ENCODE measurements at regions of chr9 and their contacts with region 1.

Region 1: DNA sequence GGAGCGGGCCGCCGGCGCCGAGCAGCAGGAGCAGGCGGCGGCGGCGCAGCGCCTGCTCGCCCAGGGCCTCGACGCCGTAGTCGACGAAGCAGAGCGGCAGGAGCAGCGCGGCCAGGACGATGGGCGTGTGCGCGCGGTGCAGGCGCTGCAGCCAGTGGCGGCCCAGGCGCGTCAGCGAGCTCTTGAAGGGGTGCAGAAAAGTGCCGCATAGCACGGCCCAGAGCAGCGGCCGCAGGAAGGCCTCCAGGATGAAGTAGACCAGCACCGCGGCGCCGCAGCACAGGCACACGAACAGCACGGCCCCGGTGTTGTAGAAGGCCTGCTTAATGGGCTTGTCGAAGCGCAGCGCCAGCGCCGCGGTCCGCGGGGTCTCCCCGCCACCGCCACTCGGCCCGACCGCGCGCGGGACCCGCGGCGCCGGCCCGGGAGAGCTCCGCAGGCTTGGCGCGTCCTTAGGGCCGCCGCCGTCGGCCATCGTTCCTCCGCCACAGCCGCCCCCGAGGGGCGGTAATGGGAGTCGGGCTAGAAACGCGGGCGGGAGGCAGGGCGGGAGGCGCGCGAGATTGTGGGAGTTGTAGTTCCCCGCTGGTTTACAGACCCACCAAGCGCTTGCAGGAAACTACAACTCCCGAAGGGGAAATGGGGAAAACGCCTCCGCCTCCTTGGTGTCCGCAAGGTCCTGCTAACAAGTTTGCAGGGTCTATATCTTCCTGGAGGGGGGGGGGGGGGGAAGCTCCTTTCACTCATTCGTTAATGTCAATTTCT is at the start of gene TMEM245:
- DNase-seq: peak; percentile 97
- total RNA-seq, gene TMEM245: 73.7 TPM

Region 2: DNA sequence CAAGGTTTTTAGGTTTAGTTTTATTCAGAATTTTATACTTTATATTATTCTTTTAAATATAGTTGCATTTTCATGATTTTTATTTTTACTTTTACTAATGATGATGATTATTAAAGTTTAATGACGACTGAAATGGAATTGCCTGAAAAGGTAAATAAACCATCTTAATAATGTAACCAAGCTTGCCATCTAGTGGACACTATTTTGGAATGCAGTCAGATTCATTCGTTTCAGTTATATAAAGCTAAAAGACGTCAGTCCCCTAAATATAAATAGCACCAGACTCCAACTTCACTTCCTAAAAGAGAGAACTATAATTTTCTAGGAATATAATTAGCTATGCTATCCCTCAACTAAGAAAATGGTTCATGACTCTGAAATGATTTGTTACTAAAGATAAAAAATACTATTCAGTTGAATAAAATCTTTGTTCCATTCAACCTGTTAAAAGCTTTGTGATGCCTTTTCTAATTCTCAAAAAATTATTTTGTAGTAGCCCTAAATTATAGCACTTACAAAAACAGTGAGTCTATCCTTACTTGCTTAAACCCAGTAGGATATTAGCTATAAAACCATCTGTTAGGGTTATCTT is 165.5 kb before region 1 on chr9:
- intact Hi-C with region 1: loop called (anchors 5 kb)
- DNase-seq: no peak

Region 3: GRCh38 chr9:109098171-109098959 is 21.3 kb before region 1 on chr9:
- intact Hi-C with region 1: loop called (anchors 2 kb)
- DNase-seq: no peak

Measured in cardiac septum (tissue), 1 donor.